ENCODE measurements at regions of chr12 and their contacts with region 1.

Region 1: GRCh38 chr12:56645717-56646446 is at the start of gene ATP5F1B:
- DNase-seq: peak; percentile 98
- ATAC-seq: peak; percentile 99
- H3K4me3 Mint-ChIP-seq: peak within 1 kb of the TSS; percentile 95
- H3K27ac Mint-ChIP-seq: peak within 1 kb of the TSS; percentile 98
- H3K4me1 Mint-ChIP-seq: peaks cover 35% of the 10 kb centered on the region
- H3K27me3 Mint-ChIP-seq: no peaks in the 10 kb centered on the region
- total RNA-seq, gene ATP5F1B: 583 to 726 TPM

Region 2: GRCh38 chr12:56593909-56594621 is 51.8 kb before region 1 on chr12:
- CTCF ChIA-PET with region 1: no interaction called
- DNase-seq: peak; percentile 79
- ATAC-seq: peak; percentile 66
- H3K4me3 Mint-ChIP-seq: no peak overlapping the region
- H3K27ac Mint-ChIP-seq: peak overlapping the region; percentile 43
- H3K4me1 Mint-ChIP-seq: peaks cover 2% of the 10 kb centered on the region
- H3K27me3 Mint-ChIP-seq: no peaks in the 10 kb centered on the region

Region 3: DNA sequence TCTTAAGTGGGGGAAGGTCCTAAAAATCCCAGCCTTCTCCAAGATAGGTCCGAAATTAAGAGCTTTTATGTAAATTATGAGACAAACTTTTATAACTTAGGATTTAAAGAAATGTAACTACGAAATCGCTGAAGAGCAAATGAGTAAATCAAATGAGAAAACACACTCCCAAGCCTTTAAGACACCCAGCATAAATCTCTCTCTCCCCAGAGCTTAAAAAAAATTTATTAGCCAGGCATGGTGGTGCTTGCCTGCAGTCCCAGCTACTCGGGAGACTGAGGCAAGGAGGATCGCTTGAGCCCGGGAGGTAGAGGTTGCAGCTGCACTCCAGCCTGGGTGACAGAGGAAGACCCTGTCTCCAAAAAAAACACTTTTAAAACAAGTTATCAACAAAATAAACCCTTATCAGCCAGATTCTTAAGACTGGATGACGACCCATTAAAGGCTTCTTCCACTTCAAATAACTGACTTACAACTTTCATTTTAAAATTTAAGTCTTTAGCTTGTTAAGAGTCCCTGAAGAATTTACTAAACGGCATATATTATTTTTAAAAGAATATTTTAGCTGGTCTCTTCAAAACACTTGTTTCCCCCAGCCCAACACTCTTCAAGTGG is 39.0 kb after region 1 on chr12:
- CTCF ChIA-PET with region 1: interaction called, 18 read pairs
- DNase-seq: no peak
- ATAC-seq: no peak
- H3K4me3 Mint-ChIP-seq: peak overlapping the region; percentile 94
- H3K27ac Mint-ChIP-seq: peak overlapping the region; percentile 100
- H3K4me1 Mint-ChIP-seq: peaks cover 44% of the 10 kb centered on the region
- H3K27me3 Mint-ChIP-seq: no peaks in the 10 kb centered on the region

Measured in activated CD8-positive, alpha-beta memory T cell treated with anti-CD3 and anti-CD28 coated beads, Interleukin-2, amount 10 ng/mL, durations not matched to agents 7 days and 5 days (primary cell).